Adrenal gland (tissue), 19 donors: ENCODE measurements at regions of chr22 and their contacts with region 1.

Region 1: DNA sequence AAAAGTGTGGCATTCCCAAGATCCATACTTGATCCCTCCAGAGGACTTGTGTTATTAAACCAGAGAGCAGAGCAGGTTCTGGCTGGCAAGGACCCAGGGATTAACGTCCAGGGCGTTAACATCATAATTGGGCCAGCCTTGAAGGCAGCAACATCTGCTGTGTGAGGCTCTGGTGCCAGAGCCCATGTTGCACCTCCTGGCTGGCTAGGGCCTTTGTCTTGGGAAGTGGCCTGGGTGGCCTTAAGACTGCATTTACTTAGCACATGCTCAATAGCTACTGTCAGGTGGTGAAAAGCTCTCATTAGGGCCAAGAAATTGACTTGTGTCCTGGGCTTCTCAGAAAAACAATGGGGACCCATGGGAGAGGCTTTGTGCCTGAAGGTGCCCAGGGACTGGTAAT is 66.6 kb downstream of the CACNG2 start:
- DNase-seq: no peak
- H3K4me3 ChIP-seq: no peak overlapping the region
- H3K27ac ChIP-seq: no peak overlapping the region
- H3K4me1 ChIP-seq: no peaks in the 10 kb centered on the region
- H3K27me3 ChIP-seq: no peaks in the 10 kb centered on the region
- CTCF ChIP-seq: no peak
- POLR2A ChIP-seq: no peak

Region 2: DNA sequence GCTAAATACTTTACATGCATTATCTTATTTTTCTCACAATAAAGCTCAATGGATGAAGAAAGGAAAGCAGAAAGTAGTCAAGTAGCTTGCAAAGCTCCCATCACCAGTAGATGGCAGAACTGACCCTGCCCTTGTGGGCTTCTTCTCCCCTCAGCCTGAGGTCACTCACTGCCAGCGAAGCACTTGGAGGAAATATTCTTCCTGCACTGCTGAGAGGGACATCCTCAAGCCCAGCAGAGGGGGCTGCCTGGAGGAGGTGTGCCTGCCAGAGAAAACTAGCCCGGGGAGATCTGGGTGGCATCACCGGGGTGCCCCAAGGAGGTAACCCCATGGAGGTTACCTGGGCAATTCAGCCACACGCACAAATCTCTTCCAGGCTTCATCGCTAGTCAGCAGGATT is 441.9 kb before region 1 on chr22:
- intact Hi-C with region 1: no loop called
- DNase-seq: peak; percentile 52 to 86 (median 73)
- H3K4me3 ChIP-seq: no peak overlapping the region
- H3K27ac ChIP-seq: peak overlapping the region in 1 of 5 donors; percentile 38
- H3K4me1 ChIP-seq: peaks cover 7 to 33% of the 10 kb centered on the region in 2 donors
- H3K27me3 ChIP-seq: no peaks in the 10 kb centered on the region
- CTCF ChIP-seq: peak; percentile 73 to 83 (median 78)
- POLR2A ChIP-seq: no peak

Region 3: GRCh38 chr22:36702842-36703215 is 65.9 kb after region 1 on chr22:
- intact Hi-C with region 1: loop called in 1 of 2 experiments (anchors 10 kb)
- DNase-seq: no peak
- H3K4me3 ChIP-seq: peak overlapping the region in 1 of 4 donors; percentile 33
- H3K27ac ChIP-seq: no peak overlapping the region
- H3K4me1 ChIP-seq: no peaks in the 10 kb centered on the region
- H3K27me3 ChIP-seq: peaks cover 20% of the 10 kb centered on the region
- CTCF ChIP-seq: no peak
- POLR2A ChIP-seq: no peak